ENCODE measurements at regions of chr2 and their contacts with region 1.

Region 1: GRCh38 chr2:237858294-237859081 is 935 bp upstream of the RAMP1 start:
- DNase-seq: peak; percentile 78 to 88
- H3K4me3 ChIP-seq: peak overlapping the region; percentile 64
- H3K27ac ChIP-seq: no peak overlapping the region
- H3K4me1 ChIP-seq: peaks cover 42% of the 10 kb centered on the region
- H3K27me3 ChIP-seq: no peaks in the 10 kb centered on the region
- CTCF ChIP-seq: peak; percentile 93

Region 2: DNA sequence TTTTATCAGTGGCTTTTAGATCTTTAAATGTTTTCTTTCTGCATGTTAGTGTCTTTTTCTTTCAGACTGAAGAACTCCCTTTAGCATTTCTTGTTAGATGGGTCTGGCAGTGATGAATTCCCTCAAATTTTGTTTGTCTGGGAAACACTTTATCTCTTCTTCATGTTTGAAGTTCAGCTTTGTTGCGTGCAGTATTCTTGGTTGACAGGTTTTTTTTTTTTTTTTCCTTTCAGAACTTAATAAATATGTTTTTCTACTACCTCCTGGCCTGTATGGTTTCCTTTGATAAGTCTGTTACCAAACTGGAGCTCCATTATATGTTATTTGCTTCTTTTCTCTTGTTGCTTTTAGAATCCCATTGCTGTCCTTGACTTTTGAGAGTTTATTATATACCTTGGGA is 1378.7 kb before region 1 on chr2:
- CTCF ChIA-PET with region 1: no interaction called
- POLR2A ChIA-PET with region 1: no interaction called
- intact Hi-C with region 1: no loop called
- DNase-seq: no peak
- H3K4me3 ChIP-seq: no peak overlapping the region
- H3K27ac ChIP-seq: no peak overlapping the region
- H3K4me1 ChIP-seq: no peaks in the 10 kb centered on the region
- H3K27me3 ChIP-seq: no peaks in the 10 kb centered on the region; the same call in 1 of the 2 replicates
- CTCF ChIP-seq: no peak

Region 3: DNA sequence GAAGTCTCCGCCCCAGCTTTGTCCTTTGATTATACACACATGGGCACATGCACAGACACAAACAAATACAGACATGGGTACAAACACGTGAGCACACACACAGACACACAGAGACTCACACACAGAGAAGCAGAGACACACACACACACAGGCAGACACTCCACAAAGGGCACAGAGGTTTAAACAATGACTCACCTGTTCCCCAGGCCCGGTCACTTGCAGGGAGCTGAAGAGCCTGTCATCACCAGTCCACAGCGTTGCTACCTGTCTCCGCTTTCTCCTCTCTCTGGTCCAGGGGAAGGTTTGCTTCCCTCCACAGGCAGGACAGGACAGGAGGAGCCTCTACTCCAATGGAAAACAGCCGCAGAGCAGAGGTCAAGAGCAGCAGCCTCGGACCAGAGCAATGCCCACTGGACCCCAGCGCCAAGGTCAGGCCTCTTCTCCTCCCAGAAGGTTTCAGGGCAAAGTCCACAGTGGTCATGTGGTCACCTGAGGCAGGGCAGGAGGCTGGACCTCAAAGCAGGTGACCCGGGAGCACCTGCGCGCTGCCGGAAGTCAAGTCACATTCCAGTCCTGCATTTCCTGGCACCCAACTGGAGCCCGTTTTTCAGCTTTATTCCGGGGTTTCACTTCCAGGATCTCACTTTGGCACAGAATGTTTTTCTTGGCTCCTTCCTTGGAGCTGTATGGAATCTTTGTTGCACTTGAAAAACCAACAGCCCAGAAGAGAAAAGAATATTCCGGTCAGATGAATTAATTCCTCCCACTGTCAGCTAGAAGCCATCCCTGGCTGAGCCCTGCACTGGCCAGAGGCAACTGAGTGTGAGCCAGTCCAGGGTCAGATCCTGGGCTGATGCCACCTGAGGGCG is 268.0 kb before region 1 on chr2 and contains the start of gene RAB17:
- CTCF ChIA-PET with region 1: no interaction called
- POLR2A ChIA-PET with region 1: no interaction called
- intact Hi-C with region 1: loop called (anchors 10 kb)
- DNase-seq: peak; percentile 91 to 94
- H3K4me3 ChIP-seq: peak within 1 kb of the TSS; percentile 64
- H3K27ac ChIP-seq: peak within 1 kb of the TSS; percentile 85
- H3K4me1 ChIP-seq: peaks cover 28% of the 10 kb centered on the region
- H3K27me3 ChIP-seq: no peaks in the 10 kb centered on the region
- CTCF ChIP-seq: no peak
- total RNA-seq, gene RAB17: 86.3 and 88.1 TPM in 2 replicates

Region 4: DNA sequence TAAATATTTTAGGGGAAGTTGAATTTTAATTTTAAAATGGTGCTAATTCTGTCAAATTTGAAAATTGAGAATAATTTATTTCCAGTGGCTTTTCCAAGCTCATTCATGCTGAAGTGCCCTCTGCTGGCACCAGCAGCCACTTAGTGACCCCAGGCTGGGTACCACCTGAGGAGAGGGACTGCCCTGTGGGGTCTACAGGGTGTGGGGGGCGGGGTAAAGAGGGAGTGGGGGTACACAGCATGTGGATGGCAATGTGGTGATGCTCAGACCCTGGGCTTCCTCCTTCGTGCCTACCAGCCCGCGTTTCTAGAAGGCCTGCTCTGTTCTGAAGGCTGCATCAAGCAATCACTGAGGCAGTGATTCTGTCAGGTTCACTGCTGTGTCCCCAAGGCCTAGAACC is 157.2 kb after region 1 on chr2:
- CTCF ChIA-PET with region 1: interaction called, 7 read pairs
- POLR2A ChIA-PET with region 1: interaction called, 4 read pairs
- intact Hi-C with region 1: loop called (anchors 1 kb)
- DNase-seq: no peak
- H3K4me3 ChIP-seq: no peak overlapping the region
- H3K27ac ChIP-seq: no peak overlapping the region
- H3K4me1 ChIP-seq: no peaks in the 10 kb centered on the region
- H3K27me3 ChIP-seq: no peaks in the 10 kb centered on the region
- CTCF ChIP-seq: peak; percentile 52

Region 5: GRCh38 chr2:238106686-238107524 is 248.4 kb after region 1 on chr2:
- CTCF ChIA-PET with region 1: no interaction called
- POLR2A ChIA-PET with region 1: no interaction called
- intact Hi-C with region 1: loop called (anchors 1 kb)
- DNase-seq: peak; percentile 48 to 69
- H3K4me3 ChIP-seq: peak overlapping the region; percentile 45; the same call in 1 of the 2 replicates
- H3K27ac ChIP-seq: no peak overlapping the region
- H3K4me1 ChIP-seq: 0 out of 2 replicates have a peak, but pooled peaks cover 8% of the 10 kb centered on the region
- H3K27me3 ChIP-seq: no peaks in the 10 kb centered on the region
- CTCF ChIP-seq: peak; percentile 62

Region 6: GRCh38 chr2:238256594-238257104 is 398.2 kb after region 1 on chr2:
- CTCF ChIA-PET with region 1: interaction called, 4 read pairs
- POLR2A ChIA-PET with region 1: no interaction called
- intact Hi-C with region 1: loop called (anchors 1 kb)
- DNase-seq: peak; percentile 84 to 96
- H3K4me3 ChIP-seq: no peak overlapping the region
- H3K27ac ChIP-seq: no peak overlapping the region
- H3K4me1 ChIP-seq: 0 out of 2 replicates have a peak, but pooled peaks cover 5% of the 10 kb centered on the region
- H3K27me3 ChIP-seq: no peaks in the 10 kb centered on the region
- CTCF ChIP-seq: peak; percentile 99

Measured in PC-9 (cell line).